CD14-positive monocyte (primary cell): ENCODE measurements at regions of chr2 and their contacts with region 1.

Region 1: DNA sequence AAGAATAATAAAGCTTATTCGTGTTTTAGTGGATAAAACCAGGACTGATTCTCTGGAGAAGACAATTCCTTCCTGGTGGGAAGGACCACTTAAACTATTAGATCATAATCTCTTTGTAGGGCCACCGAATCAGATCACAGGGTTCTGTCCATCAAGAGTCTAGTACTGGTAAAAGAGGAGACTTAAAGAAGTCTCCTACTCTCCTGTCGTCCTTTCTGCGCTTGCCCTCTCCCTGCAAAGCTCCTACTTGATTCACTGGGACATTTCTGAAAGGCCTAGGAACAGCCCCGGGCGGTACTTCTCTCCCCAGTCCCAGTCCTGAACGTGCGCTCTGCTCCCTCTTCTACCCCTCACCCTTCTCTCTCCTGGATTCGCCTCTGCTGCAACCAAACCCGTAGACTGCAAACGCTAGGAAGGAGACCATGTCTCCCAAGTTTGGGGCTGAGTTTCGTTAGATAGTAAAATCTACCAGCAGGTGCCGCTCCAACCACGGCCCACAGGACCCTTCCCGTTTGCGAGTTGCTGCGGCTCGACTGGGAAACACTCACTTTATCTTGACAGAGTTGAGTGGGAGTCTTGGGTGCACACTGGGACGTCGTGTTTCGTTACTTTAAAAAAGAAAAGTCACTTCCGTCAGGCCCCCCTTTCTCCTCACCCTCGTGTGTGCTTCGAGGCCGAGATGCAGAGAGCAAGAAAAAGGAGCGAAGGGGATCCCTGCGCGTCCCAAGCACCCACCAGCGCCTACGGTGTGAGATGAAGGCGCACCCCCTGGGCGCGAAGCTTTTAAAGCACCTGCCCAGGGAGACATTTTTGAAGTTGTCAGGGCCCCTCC is 923 bp downstream of the FIGLA start:
- DNase-seq: peak; percentile 58 to 72 (median 68)
- H3K4me3 ChIP-seq: peak overlapping the region; percentile 3 to 73 (median 19)
- H3K4me3 Mint-ChIP-seq: peak overlapping the region; percentile 80 to 94
- H3K27ac ChIP-seq: no peak overlapping the region
- H3K27ac Mint-ChIP-seq: peak overlapping the region in 1 of 7 donors; percentile 46
- H3K4me1 ChIP-seq: peaks cover 40 to 48% of the 10 kb centered on the region in 2 donors
- H3K4me1 Mint-ChIP-seq: peaks cover 48% of the 10 kb centered on the region
- H3K27me3 ChIP-seq: peaks cover 37 to 52% of the 10 kb centered on the region in 2 donors
- H3K27me3 Mint-ChIP-seq: peaks cover 30 to 49% (median 46%) of the 10 kb centered on the region in 3 donors
- CTCF ChIP-seq: peak; percentile 78

Region 2: DNA sequence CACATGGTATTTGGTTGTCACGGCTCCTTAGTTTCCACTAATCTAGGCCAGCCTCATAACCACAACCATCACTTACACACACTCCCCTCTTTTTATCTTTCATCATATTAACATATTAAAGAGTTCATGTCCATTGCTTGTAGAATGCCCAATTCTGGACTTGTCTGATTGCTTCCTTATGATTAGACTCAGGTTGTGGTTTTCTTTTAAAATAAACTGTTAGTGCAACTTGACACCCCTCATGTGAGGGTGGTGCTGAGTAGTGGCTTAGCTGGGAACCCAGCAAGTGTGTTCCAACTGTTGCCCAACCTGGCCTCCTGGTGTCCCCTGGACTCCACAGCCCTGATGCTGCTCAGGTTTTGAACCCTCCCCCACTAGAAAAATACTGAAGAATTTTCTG is 66.1 kb after region 1 on chr2:
- intact Hi-C with region 1: loop called in 1 of 2 experiments (anchors 5 kb)
- DNase-seq: no peak
- H3K4me3 ChIP-seq: no peak overlapping the region
- H3K4me3 Mint-ChIP-seq: no peak overlapping the region
- H3K27ac ChIP-seq: no peak overlapping the region
- H3K27ac Mint-ChIP-seq: peak overlapping the region in 1 of 7 donors; percentile 44
- H3K4me1 ChIP-seq: peaks cover 37 to 42% of the 10 kb centered on the region in 2 donors
- H3K4me1 Mint-ChIP-seq: peaks cover 36% of the 10 kb centered on the region
- H3K27me3 ChIP-seq: peaks cover 10 to 15% of the 10 kb centered on the region in 2 donors
- H3K27me3 Mint-ChIP-seq: peaks cover 23 to 33% (median 28%) of the 10 kb centered on the region in 3 donors
- CTCF ChIP-seq: no peak

Region 3: DNA sequence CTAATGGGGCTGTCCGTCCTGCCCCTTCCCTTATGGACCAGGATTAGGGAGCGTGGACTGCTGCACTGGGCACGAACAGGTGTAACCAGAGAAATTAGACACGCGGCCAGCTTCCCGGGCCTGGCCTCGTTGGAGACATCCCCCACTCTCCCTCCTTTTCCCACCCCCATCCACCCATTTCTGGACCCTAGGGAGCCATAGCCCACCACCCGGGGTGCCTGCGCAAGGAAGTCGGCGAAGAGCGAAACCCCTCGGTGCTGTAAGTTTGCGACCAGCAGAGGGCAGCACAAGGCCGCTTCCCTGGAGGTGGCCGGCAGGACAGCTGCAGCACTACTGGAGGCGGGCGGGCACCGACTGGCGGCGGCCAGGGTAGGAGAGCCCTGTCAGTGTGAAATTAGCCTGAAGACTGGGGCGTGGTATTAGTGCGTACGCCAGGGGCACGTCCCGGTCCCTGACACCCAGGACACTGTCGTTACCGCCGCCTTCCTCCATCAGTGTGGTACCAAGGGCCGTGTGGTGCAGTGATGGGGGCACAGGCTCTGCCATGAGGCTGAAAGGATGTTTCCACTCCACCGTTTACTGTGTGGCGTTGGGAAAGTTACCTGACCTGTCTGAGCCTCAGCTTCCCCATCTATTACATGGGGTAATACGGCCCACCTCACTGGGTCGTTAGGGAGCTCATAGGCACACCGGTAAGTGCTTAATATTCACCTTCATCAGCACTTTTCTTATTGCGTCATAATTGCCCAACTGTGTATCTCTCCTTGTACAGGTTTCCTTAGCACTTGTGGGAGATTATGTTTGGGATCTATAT is 82.1 kb after region 1 on chr2:
- intact Hi-C with region 1: loop called (anchors 5 kb)
- DNase-seq: peak; percentile 80 to 82 (median 81)
- H3K4me3 ChIP-seq: peak overlapping the region in 1 of 3 experiments; percentile 41
- H3K4me3 Mint-ChIP-seq: peak overlapping the region in 1 of 2 donors; percentile 74
- H3K27ac ChIP-seq: no peak overlapping the region
- H3K27ac Mint-ChIP-seq: no peak overlapping the region
- H3K4me1 ChIP-seq: peaks cover 0 to 9% of the 10 kb centered on the region in 2 donors
- H3K4me1 Mint-ChIP-seq: peaks cover 4% of the 10 kb centered on the region
- H3K27me3 ChIP-seq: peaks cover 12 to 54% of the 10 kb centered on the region in 2 donors
- H3K27me3 Mint-ChIP-seq: peaks cover 41 to 67% (median 66%) of the 10 kb centered on the region in 3 donors
- CTCF ChIP-seq: peak; percentile 90

Region 4: GRCh38 chr2:70919672-70920366 is 130.3 kb after region 1 on chr2:
- intact Hi-C with region 1: loop called (anchors 5 kb)
- DNase-seq: peak; percentile 54 to 71 (median 68)
- H3K4me3 ChIP-seq: no peak overlapping the region
- H3K4me3 Mint-ChIP-seq: no peak overlapping the region
- H3K27ac ChIP-seq: no peak overlapping the region
- H3K27ac Mint-ChIP-seq: no peak overlapping the region
- H3K4me1 ChIP-seq: no peaks in the 10 kb centered on the region
- H3K4me1 Mint-ChIP-seq: no peaks in the 10 kb centered on the region
- H3K27me3 ChIP-seq: peaks cover 4 to 21% of the 10 kb centered on the region in 2 donors
- H3K27me3 Mint-ChIP-seq: peaks cover 29 to 41% (median 30%) of the 10 kb centered on the region in 3 donors
- CTCF ChIP-seq: peak; percentile 93

Region 5: DNA sequence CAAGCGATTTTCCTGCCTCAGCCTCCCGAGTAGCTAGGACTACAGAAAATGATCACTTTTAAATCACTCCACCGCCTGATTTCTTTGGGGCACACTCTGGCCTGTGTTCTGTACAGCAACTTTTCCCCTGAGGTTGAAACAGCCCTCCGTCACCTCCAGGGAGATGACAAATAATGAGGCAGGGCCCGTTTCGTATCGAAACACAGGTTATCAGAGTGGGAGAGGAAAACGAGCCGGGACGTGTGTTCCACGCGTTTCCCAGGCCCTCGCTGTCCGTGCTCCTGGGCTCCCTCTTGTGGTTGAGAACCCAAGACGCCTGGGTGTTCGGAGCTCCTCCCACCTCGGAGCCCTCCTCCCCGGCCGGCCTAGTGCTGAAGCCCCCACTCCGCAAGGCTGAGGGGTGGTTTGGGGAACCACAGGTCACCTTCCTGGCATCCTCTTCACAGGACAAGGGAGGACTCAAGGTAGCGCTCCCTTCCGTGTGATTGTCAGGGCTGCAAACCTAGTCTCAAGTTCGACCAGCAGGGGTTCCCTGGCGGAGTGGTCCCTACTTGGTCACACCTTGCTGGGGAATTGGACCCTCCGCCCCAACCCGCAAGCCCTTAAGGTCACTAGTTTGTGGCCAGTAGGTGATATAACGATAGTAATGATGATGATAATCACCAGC is 158.9 kb after region 1 on chr2:
- intact Hi-C with region 1: loop called in 1 of 2 experiments (anchors 5 kb)
- DNase-seq: peak; percentile 50 to 65 (median 58)
- H3K4me3 ChIP-seq: peak overlapping the region in 1 of 3 experiments; percentile 56
- H3K4me3 Mint-ChIP-seq: peak overlapping the region; percentile 75 to 96
- H3K27ac ChIP-seq: no peak overlapping the region
- H3K27ac Mint-ChIP-seq: peak overlapping the region in 2 of 7 donors; percentile 38 to 79
- H3K4me1 ChIP-seq: peaks cover 8 to 9% of the 10 kb centered on the region in 2 donors
- H3K4me1 Mint-ChIP-seq: peaks cover 12% of the 10 kb centered on the region
- H3K27me3 ChIP-seq: peaks cover 12 to 35% of the 10 kb centered on the region in 2 donors
- H3K27me3 Mint-ChIP-seq: peaks cover 48 to 59% (median 50%) of the 10 kb centered on the region in 3 donors
- CTCF ChIP-seq: peak; percentile 88